Activated B cell treated with CpG ODN at 0.5 μM for 24 hours (primary cell): ENCODE measurements at regions of chr2 and their contacts with region 1.

Region 1: GRCh38 chr2:20411361-20411894 is 35.4 kb upstream of the RHOB start:
- DNase-seq: peak; percentile 54
- ATAC-seq: peak; percentile 100
- H3K4me3 Mint-ChIP-seq: no peak overlapping the region
- H3K27ac Mint-ChIP-seq: no peak overlapping the region
- H3K4me1 Mint-ChIP-seq: no peaks in the 10 kb centered on the region
- H3K27me3 Mint-ChIP-seq: peaks cover 12% of the 10 kb centered on the region
- CTCF ChIP-seq: no peak

Region 2: DNA sequence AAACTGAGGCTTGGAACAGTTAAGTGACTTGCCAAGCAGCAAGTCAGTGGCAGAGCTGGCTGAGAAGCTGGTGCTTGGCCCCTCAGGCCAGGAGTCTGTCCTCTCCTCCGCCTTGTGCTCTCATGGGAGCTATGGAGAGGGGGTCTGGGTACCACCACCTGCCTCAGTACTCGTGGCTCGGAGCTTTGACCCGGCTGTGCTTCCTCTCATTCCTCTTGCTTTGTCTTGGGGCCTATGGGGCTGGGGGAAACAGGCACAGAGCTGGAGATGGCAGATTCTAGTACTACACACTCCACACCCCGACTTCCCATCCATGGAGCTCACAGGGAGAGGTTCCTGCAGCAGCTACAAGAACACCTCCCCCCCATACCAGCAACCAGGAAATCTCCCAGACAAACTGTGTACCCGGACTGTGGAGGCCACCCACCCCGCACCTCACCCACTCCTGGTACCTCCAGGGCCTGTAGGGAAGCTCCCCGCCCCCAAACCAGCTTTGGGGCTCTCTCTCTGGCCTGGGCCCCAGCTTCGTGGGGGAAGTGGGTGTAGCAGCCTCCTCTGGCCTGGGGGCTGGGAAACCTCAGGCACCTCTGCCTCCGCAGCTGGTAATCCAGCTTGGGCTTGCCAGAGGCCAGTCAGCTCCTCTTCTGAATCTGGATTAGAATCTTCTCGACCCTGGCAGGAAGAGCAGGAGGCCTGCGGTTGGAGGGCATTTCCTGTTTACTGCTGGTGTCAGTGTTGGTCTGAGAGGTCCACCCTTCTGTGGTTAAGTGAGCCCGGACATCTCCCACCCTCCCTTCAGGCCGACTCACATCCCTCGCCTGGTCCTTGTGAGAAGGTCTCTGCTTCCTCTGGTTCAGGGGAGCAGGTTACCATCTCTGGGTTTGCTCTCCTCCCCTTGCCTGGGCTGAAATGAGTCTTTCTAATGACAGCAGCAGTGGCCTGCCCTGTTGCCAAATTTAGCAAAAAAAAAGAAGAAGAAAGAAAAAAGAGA is 13.2 kb after region 1 on chr2:
- CTCF ChIA-PET with region 1: interaction called, 12 read pairs
- POLR2A ChIA-PET with region 1: interaction called, 4 read pairs
- intact Hi-C with region 1: no loop called
- DNase-seq: no peak
- ATAC-seq: peak; percentile 53
- H3K4me3 Mint-ChIP-seq: peak overlapping the region; percentile 72
- H3K27ac Mint-ChIP-seq: peak overlapping the region; percentile 83
- H3K4me1 Mint-ChIP-seq: peaks cover 58% of the 10 kb centered on the region
- H3K27me3 Mint-ChIP-seq: no peaks in the 10 kb centered on the region
- CTCF ChIP-seq: no peak

Region 3: DNA sequence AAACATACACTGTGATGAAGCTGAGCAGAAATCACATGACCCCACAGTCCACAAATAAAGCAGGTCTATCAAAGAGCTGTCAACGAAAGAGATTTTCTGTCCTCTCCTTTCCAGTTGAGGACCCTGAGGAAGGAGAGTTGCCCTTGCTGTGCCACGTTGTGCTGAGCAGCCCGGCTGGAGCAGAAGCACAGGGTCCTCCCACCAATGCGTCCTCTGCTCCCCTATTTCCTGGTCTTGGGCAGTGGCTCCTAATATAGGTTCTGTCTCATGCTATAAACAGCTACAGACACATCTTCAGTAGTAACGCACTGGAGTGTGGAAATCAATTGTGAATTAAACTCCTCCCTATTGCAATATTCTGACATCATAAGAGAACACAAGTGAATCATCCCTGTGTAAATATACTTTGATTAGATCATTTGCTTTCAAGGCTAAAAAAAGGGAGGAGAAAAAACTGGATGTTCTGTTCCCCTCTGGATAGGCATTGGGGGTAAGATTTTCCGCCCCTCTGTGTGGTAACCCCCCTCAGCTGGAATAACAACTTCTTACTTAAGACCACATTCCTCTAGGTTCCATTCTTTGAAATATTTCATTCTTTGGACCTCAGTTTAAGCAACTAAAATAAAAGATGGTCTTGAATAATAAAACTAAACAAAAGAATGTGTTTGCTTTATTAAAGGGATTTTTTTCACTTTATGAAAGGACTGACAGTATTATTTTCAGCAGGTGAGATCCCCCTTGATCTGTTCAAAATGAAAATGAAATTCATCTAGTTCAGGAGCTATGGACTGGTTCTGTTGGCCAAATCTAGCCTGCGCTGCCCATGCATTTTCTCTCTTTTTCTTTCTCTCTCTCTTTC is 27.1 kb after region 1 on chr2:
- CTCF ChIA-PET with region 1: interaction called, 11 read pairs
- POLR2A ChIA-PET with region 1: interaction called, 3 read pairs
- intact Hi-C with region 1: loop called (anchors 1 kb)
- DNase-seq: no peak
- ATAC-seq: no peak
- H3K4me3 Mint-ChIP-seq: no peak overlapping the region
- H3K27ac Mint-ChIP-seq: no peak overlapping the region
- H3K4me1 Mint-ChIP-seq: no peaks in the 10 kb centered on the region
- H3K27me3 Mint-ChIP-seq: peaks cover 13% of the 10 kb centered on the region
- CTCF ChIP-seq: no peak

Region 4: GRCh38 chr2:20516646-20517341 is 105.4 kb after region 1 on chr2:
- CTCF ChIA-PET with region 1: no interaction called
- POLR2A ChIA-PET with region 1: no interaction called
- intact Hi-C with region 1: no loop called
- DNase-seq: no peak
- ATAC-seq: no peak
- H3K4me3 Mint-ChIP-seq: no peak overlapping the region
- H3K27ac Mint-ChIP-seq: no peak overlapping the region
- H3K4me1 Mint-ChIP-seq: no peaks in the 10 kb centered on the region
- H3K27me3 Mint-ChIP-seq: peaks cover 2% of the 10 kb centered on the region
- CTCF ChIP-seq: no peak

Region 5: GRCh38 chr2:20635675-20636584 is 224.5 kb after region 1 on chr2:
- CTCF ChIA-PET with region 1: interaction called, 7 read pairs
- POLR2A ChIA-PET with region 1: no interaction called
- intact Hi-C with region 1: loop called (anchors 1 kb)
- DNase-seq: peak; percentile 64
- ATAC-seq: peak; percentile 97
- H3K4me3 Mint-ChIP-seq: no peak overlapping the region
- H3K27ac Mint-ChIP-seq: no peak overlapping the region
- H3K4me1 Mint-ChIP-seq: peaks cover 8% of the 10 kb centered on the region
- H3K27me3 Mint-ChIP-seq: no peaks in the 10 kb centered on the region
- CTCF ChIP-seq: no peak

Region 6: GRCh38 chr2:20642055-20642971 is 230.9 kb after region 1 on chr2:
- CTCF ChIA-PET with region 1: interaction called, 77 read pairs
- POLR2A ChIA-PET with region 1: no interaction called
- intact Hi-C with region 1: loop called (anchors 1 kb)
- DNase-seq: peak; percentile 73
- ATAC-seq: peak; percentile 100
- H3K4me3 Mint-ChIP-seq: no peak overlapping the region
- H3K27ac Mint-ChIP-seq: no peak overlapping the region
- H3K4me1 Mint-ChIP-seq: peaks cover 5% of the 10 kb centered on the region
- H3K27me3 Mint-ChIP-seq: no peaks in the 10 kb centered on the region
- CTCF ChIP-seq: peak; percentile 55

Region 7: DNA sequence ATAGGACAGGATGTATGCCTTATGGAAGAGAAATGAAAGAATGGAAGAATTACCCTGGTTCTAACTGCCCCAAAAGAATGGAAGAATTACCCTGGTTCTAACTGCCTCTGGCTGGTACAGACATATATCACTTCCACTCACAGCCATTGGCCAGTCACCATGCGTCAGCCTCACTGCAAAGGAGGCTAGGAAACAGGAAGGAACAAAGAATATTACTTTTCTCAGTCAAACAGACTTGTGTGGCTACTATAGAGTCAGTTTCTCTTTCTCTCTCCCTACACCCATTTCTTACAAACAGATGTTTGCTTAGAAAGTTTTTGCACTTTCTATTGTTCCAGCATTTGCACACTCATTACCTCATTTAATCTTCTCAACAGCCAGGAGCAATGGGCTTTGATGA is 1862.4 kb after region 1 on chr2:
- CTCF ChIA-PET with region 1: no interaction called
- POLR2A ChIA-PET with region 1: no interaction called
- intact Hi-C with region 1: no loop called
- DNase-seq: no peak
- ATAC-seq: no peak
- H3K4me3 Mint-ChIP-seq: no peak overlapping the region
- H3K27ac Mint-ChIP-seq: no peak overlapping the region
- H3K4me1 Mint-ChIP-seq: no peaks in the 10 kb centered on the region
- H3K27me3 Mint-ChIP-seq: no peaks in the 10 kb centered on the region
- CTCF ChIP-seq: no peak